PC-9 (cell line): ENCODE measurements at regions of chr3 and their contacts with region 1.

Region 1: GRCh38 chr3:152969561-152970240 is 134.8 kb downstream of the P2RY1 start:
- DNase-seq: peak; percentile 24 to 91
- H3K4me3 ChIP-seq: no peak overlapping the region
- H3K27ac ChIP-seq: peak overlapping the region; percentile 23
- H3K4me1 ChIP-seq: peaks cover 48% of the 10 kb centered on the region
- H3K27me3 ChIP-seq: no peaks in the 10 kb centered on the region
- CTCF ChIP-seq: no peak

Region 2: GRCh38 chr3:152834776-152835600 is 134.7 kb before region 1 on chr3 and contains the start of gene P2RY1:
- CTCF ChIA-PET with region 1: no interaction called
- POLR2A ChIA-PET with region 1: interaction called, 5 read pairs
- intact Hi-C with region 1: loop called (anchors 2 kb)
- DNase-seq: peak; percentile 59 to 85
- H3K4me3 ChIP-seq: peak within 1 kb of the TSS; percentile 94
- H3K27ac ChIP-seq: peak within 1 kb of the TSS; percentile 16; the same call in 1 of the 2 replicates
- H3K4me1 ChIP-seq: peaks cover 9% of the 10 kb centered on the region
- H3K27me3 ChIP-seq: no peaks in the 10 kb centered on the region
- CTCF ChIP-seq: no peak; the same call in 1 of the 2 replicates
- total RNA-seq, gene P2RY1: 0.88 and 1.2 TPM in 2 replicates

Region 3: DNA sequence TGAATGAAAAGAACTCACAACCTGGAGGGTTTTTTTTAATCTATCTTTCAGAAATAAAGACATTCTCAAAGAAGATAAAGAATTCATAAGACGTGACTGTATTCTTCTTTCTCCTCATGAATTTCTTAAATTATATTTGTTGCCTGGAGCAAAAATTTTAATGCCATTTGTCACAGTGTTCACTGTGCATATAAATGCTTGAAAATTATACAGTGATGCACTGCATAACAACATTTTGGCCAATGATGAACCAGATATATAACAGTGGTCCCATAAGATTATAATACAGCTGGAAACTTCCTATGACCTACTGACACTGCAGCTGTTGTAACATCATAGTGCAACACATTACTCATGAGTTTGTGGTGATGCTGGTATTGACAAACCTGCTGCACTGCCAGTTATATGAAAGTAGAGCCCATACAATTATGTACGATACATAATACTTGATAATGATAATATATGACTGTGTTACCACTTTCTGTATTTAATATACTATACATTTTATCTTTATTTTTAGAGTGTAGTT is 67.5 kb before region 1 on chr3:
- CTCF ChIA-PET with region 1: no interaction called
- POLR2A ChIA-PET with region 1: no interaction called
- intact Hi-C with region 1: no loop called
- DNase-seq: no peak
- H3K4me3 ChIP-seq: no peak overlapping the region
- H3K27ac ChIP-seq: no peak overlapping the region
- H3K4me1 ChIP-seq: no peaks in the 10 kb centered on the region
- H3K27me3 ChIP-seq: no peaks in the 10 kb centered on the region
- CTCF ChIP-seq: no peak

Region 4: DNA sequence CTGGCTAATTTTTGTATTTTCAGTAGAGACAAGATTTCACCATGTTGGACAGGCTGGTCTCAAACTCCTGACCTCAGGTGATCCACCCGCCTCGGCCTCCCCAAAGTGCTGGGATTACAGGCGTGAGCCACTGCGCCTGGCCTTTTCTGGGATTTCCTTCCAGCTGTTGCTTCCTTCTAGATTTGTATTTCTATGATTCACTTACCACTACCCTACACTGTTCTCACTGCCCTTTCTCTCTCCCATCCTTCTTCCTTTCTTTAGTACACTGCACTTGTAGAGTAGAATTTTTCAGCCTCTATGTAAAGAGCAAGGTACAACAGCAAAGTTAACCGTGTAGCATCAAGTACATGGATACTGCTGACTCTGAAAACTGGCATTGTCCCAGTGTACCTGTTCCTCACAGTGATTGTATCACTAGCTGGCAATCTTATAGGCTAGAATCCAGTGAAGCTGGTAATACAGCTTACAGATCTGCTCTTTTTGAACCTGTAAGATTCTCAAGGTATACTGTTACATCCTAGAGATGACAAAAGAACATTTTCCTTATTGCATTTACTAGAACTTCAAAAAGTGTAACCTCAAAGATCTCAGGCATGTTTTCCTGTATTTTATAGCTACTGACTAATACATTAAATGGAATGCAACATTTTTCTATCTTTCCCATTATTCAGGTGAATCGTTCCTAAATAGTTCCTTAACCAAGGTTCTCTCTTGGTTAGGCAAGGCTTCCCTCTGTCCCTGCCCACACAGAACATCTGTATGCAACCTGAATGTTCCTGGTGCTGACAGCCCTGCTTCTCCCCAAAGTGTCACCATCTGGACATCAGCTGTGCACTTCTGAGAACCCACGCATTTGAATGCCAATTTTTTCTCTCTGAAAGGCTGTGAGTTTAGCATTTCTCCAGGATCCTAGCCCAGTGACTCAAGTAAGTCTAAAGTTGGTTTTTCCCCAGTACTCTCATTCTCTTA is 118.2 kb after region 1 on chr3:
- CTCF ChIA-PET with region 1: no interaction called
- POLR2A ChIA-PET with region 1: no interaction called
- intact Hi-C with region 1: no loop called
- DNase-seq: peak in 1 of 2 experiments; percentile 67
- H3K4me3 ChIP-seq: no peak overlapping the region
- H3K27ac ChIP-seq: no peak overlapping the region
- H3K4me1 ChIP-seq: peaks cover 7% of the 10 kb centered on the region; the same call in 1 of the 2 replicates
- H3K27me3 ChIP-seq: no peaks in the 10 kb centered on the region
- CTCF ChIP-seq: no peak